ENCODE measurements at regions of chr19 and their contacts with region 1.

Region 1: GRCh38 chr19:33373701-33374421 is at the start of gene CEBPG:
- DNase-seq: no peak
- ATAC-seq: peak; percentile 49
- H3K4me3 ChIP-seq: peak within 1 kb of the TSS; percentile 74 to 90 (median 89)
- H3K27ac ChIP-seq: peak within 1 kb of the TSS; percentile 96
- H3K4me1 ChIP-seq: peaks cover 44% of the 10 kb centered on the region
- H3K27me3 ChIP-seq: peaks cover 0 to 3% of the 10 kb centered on the region in 2 experiments; a peak in 2 of 5 replicates
- CTCF ChIP-seq: no peak; the same call in 1 of the 2 replicates
- EP300 ChIP-seq: 0 out of 4 replicates have a peak, but pooled peaks of 1 of the 2 experiments have one; percentile 48
- POLR2A ChIP-seq: peak; percentile 66 to 83
- RAD21 ChIP-seq: peak; percentile 67; the same call in 1 of the 2 replicates
- total RNA-seq, gene CEBPG: 34.3 and 49.8 TPM in 2 replicates

Region 2: GRCh38 chr19:33350538-33351309 is 23.1 kb before region 1 on chr19:
- CTCF ChIA-PET with region 1: no interaction called
- POLR2A ChIA-PET with region 1: interaction called, 50 read pairs
- in situ Hi-C with region 1: no loop called
- intact Hi-C with region 1: no loop called
- DNase-seq: no peak
- ATAC-seq: no peak
- H3K4me3 ChIP-seq: no peak overlapping the region
- H3K27ac ChIP-seq: no peak overlapping the region
- H3K4me1 ChIP-seq: peaks cover 40% of the 10 kb centered on the region
- H3K27me3 ChIP-seq: no peaks in the 10 kb centered on the region
- CTCF ChIP-seq: no peak
- EP300 ChIP-seq: no peak
- POLR2A ChIP-seq: no peak
- RAD21 ChIP-seq: no peak

Region 3: GRCh38 chr19:33385956-33386355 is 12.1 kb after region 1 on chr19:
- CTCF ChIA-PET with region 1: no interaction called
- POLR2A ChIA-PET with region 1: interaction called, 35 read pairs
- in situ Hi-C with region 1: no loop called
- intact Hi-C with region 1: no loop called
- DNase-seq: no peak
- ATAC-seq: no peak
- H3K4me3 ChIP-seq: no peak overlapping the region
- H3K27ac ChIP-seq: peak overlapping the region; percentile 22
- H3K4me1 ChIP-seq: peaks cover 37% of the 10 kb centered on the region
- H3K27me3 ChIP-seq: no peaks in the 10 kb centered on the region
- CTCF ChIP-seq: no peak
- EP300 ChIP-seq: no peak
- POLR2A ChIP-seq: no peak
- RAD21 ChIP-seq: no peak

Region 4: GRCh38 chr19:33394006-33394849 is 20.4 kb after region 1 on chr19:
- CTCF ChIA-PET with region 1: no interaction called
- POLR2A ChIA-PET with region 1: interaction called, 35 read pairs
- in situ Hi-C with region 1: no loop called
- intact Hi-C with region 1: no loop called
- DNase-seq: peak; percentile 55
- ATAC-seq: peak; percentile 5
- H3K4me3 ChIP-seq: peak overlapping the region; percentile 15 to 64 (median 33); a peak in 4 of 6 replicates
- H3K27ac ChIP-seq: peak overlapping the region; percentile 94
- H3K4me1 ChIP-seq: peaks cover 95% of the 10 kb centered on the region
- H3K27me3 ChIP-seq: no peaks in the 10 kb centered on the region
- CTCF ChIP-seq: no peak
- EP300 ChIP-seq: no peak; a peak in 1 of 4 replicates
- POLR2A ChIP-seq: peak; percentile 36 to 44; a peak in 1 of 4 replicates
- RAD21 ChIP-seq: peak; percentile 45; the same call in 1 of the 2 replicates

Region 5: GRCh38 chr19:33399745-33400681 is 26.2 kb after region 1 on chr19:
- CTCF ChIA-PET with region 1: no interaction called
- POLR2A ChIA-PET with region 1: interaction called, 25 read pairs
- in situ Hi-C with region 1: no loop called
- intact Hi-C with region 1: no loop called
- DNase-seq: no peak
- ATAC-seq: no peak; the same call in 2 of the 3 replicates
- H3K4me3 ChIP-seq: no peak overlapping the region
- H3K27ac ChIP-seq: peak overlapping the region; percentile 95
- H3K4me1 ChIP-seq: peaks cover 100% of the 10 kb centered on the region
- H3K27me3 ChIP-seq: no peaks in the 10 kb centered on the region
- CTCF ChIP-seq: peak; percentile 23
- EP300 ChIP-seq: peak in 1 of 2 experiments; percentile 49; a peak in 1 of 4 replicates
- POLR2A ChIP-seq: peak in 1 of 2 experiments; percentile 49; a peak in 1 of 4 replicates
- RAD21 ChIP-seq: no peak

Region 6: DNA sequence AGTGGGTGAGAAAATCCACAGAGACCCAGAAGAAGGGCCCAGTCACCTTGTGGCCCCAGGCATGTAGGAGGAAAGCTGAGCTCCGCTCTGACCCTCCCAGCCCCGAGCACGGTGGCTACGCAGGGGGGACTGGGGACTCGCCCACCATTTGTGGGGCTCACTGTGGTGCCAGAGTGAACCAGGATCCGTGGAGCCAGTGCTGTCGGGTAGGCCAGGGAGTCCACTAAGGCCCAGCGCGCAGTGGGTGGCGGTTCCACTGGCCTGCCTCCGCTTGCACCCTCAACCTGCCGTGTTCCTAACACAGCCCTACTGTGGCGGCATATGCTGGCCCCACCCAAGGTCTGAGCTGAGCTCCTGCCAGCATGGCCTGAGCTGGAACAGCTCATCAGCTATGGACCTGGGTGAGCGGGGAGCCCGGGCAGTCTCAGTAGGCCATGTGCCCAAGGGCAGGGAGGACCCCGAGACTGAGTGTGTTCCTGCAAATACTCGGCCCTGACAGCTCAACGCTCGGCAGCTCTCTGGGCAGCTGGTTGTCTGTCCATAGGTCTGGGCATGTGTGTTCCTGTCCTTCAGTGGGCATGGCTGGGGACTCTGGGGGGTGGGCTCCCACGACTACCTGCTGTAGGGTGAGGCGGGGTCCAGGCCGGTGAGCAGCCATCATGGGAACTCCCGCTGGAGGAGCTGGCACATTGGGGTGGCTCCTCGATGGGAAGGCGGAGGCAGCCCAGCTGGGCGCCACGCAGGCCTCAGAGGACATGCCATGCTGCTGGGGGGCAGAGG is 36.2 kb after region 1 on chr19:
- CTCF ChIA-PET with region 1: no interaction called
- POLR2A ChIA-PET with region 1: no interaction called
- in situ Hi-C with region 1: no loop called
- intact Hi-C with region 1: no loop called
- DNase-seq: no peak
- ATAC-seq: no peak
- H3K4me3 ChIP-seq: no peak overlapping the region
- H3K27ac ChIP-seq: no peak overlapping the region
- H3K4me1 ChIP-seq: peaks cover 18% of the 10 kb centered on the region
- H3K27me3 ChIP-seq: no peaks in the 10 kb centered on the region
- CTCF ChIP-seq: no peak
- EP300 ChIP-seq: no peak
- POLR2A ChIP-seq: no peak
- RAD21 ChIP-seq: no peak

Region 7: GRCh38 chr19:33438007-33438671 is 64.3 kb after region 1 on chr19:
- CTCF ChIA-PET with region 1: no interaction called
- POLR2A ChIA-PET with region 1: no interaction called
- in situ Hi-C with region 1: no loop called
- intact Hi-C with region 1: no loop called
- DNase-seq: no peak
- ATAC-seq: peak; percentile 39; the same call in 2 of the 3 replicates
- H3K4me3 ChIP-seq: no peak overlapping the region
- H3K27ac ChIP-seq: no peak overlapping the region
- H3K4me1 ChIP-seq: peaks cover 7% of the 10 kb centered on the region; the same call in 1 of the 2 replicates
- H3K27me3 ChIP-seq: no peaks in the 10 kb centered on the region
- CTCF ChIP-seq: peak; percentile 11; the same call in 1 of the 2 replicates
- EP300 ChIP-seq: no peak
- POLR2A ChIP-seq: no peak
- RAD21 ChIP-seq: no peak

Measured in HepG2 (cell line).